CD14-positive monocyte (primary cell): ENCODE measurements at regions of chr13 and their contacts with region 1.

Region 1: DNA sequence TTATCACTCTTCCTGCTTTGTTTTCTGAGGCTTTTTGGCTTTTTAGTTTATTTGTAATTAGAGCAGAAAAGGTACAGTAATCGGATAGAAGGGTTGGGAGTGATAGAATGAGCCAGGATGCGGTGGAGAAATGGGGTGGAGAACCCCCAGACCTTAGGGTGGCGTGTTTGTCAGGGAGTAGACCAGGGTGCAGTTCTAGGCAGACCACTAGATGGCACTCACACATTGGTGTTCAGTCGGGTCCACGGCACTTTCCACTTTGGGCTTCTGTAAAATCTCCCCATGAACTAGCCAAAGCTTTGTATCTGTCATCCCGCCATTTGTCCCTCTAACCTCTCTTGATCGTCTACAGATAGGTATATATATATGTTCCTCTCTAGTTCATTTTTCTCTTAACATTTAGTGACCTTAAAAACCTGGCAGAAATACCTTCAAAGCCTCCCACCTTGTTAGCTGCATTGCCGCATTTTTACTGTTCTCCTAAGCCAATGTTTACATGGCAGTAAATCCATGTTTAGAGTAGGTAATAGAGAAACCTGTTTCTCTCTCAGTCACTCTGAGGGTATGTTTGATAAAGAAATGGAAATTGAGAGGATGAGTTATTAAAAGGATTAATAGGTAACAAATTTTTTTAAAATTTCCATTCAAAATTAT is 154.9 kb downstream of the TM9SF2 start:
- DNase-seq: peak; percentile 32 to 59 (median 56)
- H3K4me3 ChIP-seq: no peak overlapping the region
- H3K4me3 Mint-ChIP-seq: peak overlapping the region in 1 of 2 donors; percentile 75
- H3K27ac ChIP-seq: no peak overlapping the region
- H3K27ac Mint-ChIP-seq: no peak overlapping the region
- H3K4me1 ChIP-seq: peaks cover 9 to 12% of the 10 kb centered on the region in 2 donors
- H3K4me1 Mint-ChIP-seq: peaks cover 20% of the 10 kb centered on the region
- H3K27me3 ChIP-seq: peaks cover 35 to 48% of the 10 kb centered on the region in 2 donors
- H3K27me3 Mint-ChIP-seq: peaks cover 40 to 48% (median 44%) of the 10 kb centered on the region in 3 donors
- CTCF ChIP-seq: peak; percentile 90

Region 2: GRCh38 chr13:100520936-100521850 is 865.0 kb after region 1 on chr13:
- intact Hi-C with region 1: loop called (anchors 10 kb)
- DNase-seq: no peak
- H3K4me3 ChIP-seq: no peak overlapping the region
- H3K4me3 Mint-ChIP-seq: peak overlapping the region in 1 of 2 donors; percentile 62
- H3K27ac ChIP-seq: no peak overlapping the region
- H3K27ac Mint-ChIP-seq: no peak overlapping the region
- H3K4me1 ChIP-seq: peaks cover 0 to 2% of the 10 kb centered on the region in 2 donors
- H3K4me1 Mint-ChIP-seq: peaks cover 18% of the 10 kb centered on the region
- H3K27me3 ChIP-seq: peaks cover 15 to 29% of the 10 kb centered on the region in 2 donors
- H3K27me3 Mint-ChIP-seq: peaks cover 5 to 23% (median 12%) of the 10 kb centered on the region in 3 donors
- CTCF ChIP-seq: no peak

Region 3: DNA sequence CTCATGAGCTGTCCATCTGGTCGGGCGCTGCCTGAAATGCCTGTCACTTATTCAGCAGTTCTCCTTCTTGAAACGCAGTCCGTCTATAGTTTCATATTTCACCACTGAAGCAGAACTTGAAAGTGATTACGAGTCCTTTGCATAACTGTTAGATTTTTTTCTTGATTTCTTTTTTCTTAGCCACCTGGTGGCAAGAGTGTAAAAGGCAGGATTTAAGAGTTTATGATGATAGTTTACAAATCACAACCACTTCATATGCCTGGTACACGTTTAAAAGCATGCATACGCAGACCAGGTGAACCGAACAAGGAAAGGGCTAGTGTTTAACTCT is 886.6 kb after region 1 on chr13:
- intact Hi-C with region 1: loop called in 1 of 2 experiments (anchors 10 kb)
- DNase-seq: peak; percentile 44 to 62 (median 50)
- H3K4me3 ChIP-seq: no peak overlapping the region
- H3K4me3 Mint-ChIP-seq: peak overlapping the region in 1 of 2 donors; percentile 53
- H3K27ac ChIP-seq: no peak overlapping the region
- H3K27ac Mint-ChIP-seq: peak overlapping the region in 1 of 7 donors; percentile 16
- H3K4me1 ChIP-seq: peaks cover 4 to 5% of the 10 kb centered on the region in 2 donors
- H3K4me1 Mint-ChIP-seq: peaks cover 6% of the 10 kb centered on the region
- H3K27me3 ChIP-seq: no peaks in the 10 kb centered on the region
- H3K27me3 Mint-ChIP-seq: peaks cover 0 to 6% (median 2%) of the 10 kb centered on the region in 3 donors
- CTCF ChIP-seq: peak; percentile 69